Calu3 (cell line): ENCODE measurements at regions of chr15 and their contacts with region 1.

Region 1: DNA sequence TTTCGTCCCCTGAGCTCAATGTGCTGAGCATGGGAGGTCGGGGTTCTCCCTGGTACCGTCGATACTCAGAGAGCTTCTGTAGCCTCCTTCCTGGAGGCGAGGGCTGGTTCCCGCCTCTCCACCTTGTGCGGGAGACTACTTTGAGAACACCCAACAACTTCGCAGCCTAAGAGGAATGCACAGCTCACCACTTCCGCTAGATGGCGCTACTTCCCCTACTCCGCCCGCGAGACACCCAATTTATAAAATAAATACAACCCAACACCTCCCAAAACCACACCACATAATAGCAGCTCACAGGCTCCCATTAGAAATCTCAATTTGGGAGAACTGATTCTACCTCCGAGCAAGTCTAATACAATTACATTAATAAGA is 1.2 kb downstream of the RGMA start:
- DNase-seq: peak; percentile 78
- H3K4me3 Mint-ChIP-seq: peak overlapping the region; percentile 62
- H3K27ac Mint-ChIP-seq: no peak overlapping the region
- H3K4me1 Mint-ChIP-seq: peaks cover 16% of the 10 kb centered on the region
- H3K27me3 Mint-ChIP-seq: peaks cover 81% of the 10 kb centered on the region
- CTCF ChIP-seq: peak; percentile 83

Region 2: GRCh38 chr15:92936693-92937092 is 151.1 kb before region 1 on chr15:
- CTCF ChIA-PET with region 1: interaction called, 10 read pairs
- intact Hi-C with region 1: no loop called
- DNase-seq: no peak
- H3K4me3 Mint-ChIP-seq: no peak overlapping the region
- H3K27ac Mint-ChIP-seq: no peak overlapping the region
- H3K4me1 Mint-ChIP-seq: peaks cover 4% of the 10 kb centered on the region
- H3K27me3 Mint-ChIP-seq: no peaks in the 10 kb centered on the region
- CTCF ChIP-seq: no peak

Region 3: DNA sequence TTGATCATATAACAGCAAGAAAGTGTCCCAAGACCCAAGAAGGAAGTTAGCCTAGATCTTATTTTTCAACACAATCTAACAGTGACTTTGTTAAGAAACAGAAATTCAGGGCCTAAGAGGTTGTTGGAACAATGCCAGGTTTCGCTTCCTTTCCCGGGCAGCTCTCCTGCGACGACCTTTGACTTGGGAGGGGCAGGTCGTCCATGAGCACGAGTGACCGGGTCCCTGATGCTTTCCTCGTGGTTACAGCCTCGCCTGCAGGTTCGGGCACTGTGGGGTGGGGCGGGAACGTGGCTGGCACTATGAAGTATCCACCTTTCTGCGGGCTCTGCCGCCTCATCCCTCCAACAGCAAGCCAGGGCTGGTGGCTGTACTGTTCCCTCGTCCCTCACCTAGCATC is 91.3 kb after region 1 on chr15:
- CTCF ChIA-PET with region 1: no interaction called
- intact Hi-C with region 1: loop called (anchors 5 kb)
- DNase-seq: peak; percentile 54
- H3K4me3 Mint-ChIP-seq: no peak overlapping the region
- H3K27ac Mint-ChIP-seq: no peak overlapping the region
- H3K4me1 Mint-ChIP-seq: peaks cover 16% of the 10 kb centered on the region
- H3K27me3 Mint-ChIP-seq: no peaks in the 10 kb centered on the region
- CTCF ChIP-seq: no peak

Region 4: GRCh38 chr15:93341164-93341563 is 253.4 kb after region 1 on chr15:
- CTCF ChIA-PET with region 1: no interaction called
- intact Hi-C with region 1: loop called (anchors 5 kb)
- DNase-seq: no peak
- H3K4me3 Mint-ChIP-seq: no peak overlapping the region
- H3K27ac Mint-ChIP-seq: no peak overlapping the region
- H3K4me1 Mint-ChIP-seq: no peaks in the 10 kb centered on the region
- H3K27me3 Mint-ChIP-seq: peaks cover 60% of the 10 kb centered on the region
- CTCF ChIP-seq: no peak

Region 5: GRCh38 chr15:93974804-93975481 is 887.1 kb after region 1 on chr15:
- CTCF ChIA-PET with region 1: interaction called, 31 read pairs
- intact Hi-C with region 1: loop called (anchors 1 kb)
- DNase-seq: no peak
- H3K4me3 Mint-ChIP-seq: no peak overlapping the region
- H3K27ac Mint-ChIP-seq: no peak overlapping the region
- H3K4me1 Mint-ChIP-seq: no peaks in the 10 kb centered on the region
- H3K27me3 Mint-ChIP-seq: peaks cover 12% of the 10 kb centered on the region
- CTCF ChIP-seq: no peak